ENCODE measurements at regions of chr19 and their contacts with region 1.

Region 1: DNA sequence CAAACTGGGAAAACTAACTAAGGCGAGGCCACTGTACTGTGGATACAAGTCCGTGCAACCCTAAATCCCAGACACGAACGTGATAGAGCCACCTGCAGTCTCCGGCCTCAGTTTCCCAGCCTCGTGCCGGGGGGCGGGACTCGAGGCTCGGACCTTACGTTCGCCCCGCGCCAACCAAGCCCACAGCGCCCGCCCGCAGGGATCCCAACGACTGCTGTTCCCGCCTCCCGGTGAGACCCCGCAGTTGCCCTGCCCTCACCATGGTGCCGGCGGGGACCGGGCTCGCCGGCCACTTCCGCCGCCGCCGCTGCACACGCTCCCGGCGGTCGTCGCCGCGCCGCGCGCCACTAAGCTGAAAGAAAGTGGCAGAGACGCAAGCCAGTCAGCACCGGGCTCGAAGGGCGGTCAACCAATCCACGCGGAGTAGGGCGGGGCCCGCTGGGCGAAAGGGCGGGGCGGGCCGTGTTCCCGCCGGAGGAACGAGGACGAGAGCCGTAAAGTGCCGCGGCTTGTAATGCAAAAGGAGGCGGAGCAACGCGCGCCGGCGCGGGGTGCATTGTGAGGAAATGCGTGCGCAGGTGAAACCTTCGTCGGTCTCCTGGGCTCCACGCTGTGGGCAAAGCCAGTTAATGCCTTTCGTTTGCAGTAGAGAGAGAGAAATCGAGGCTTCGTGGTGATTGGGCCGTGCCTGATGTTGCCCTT is at the start of gene LSM4:
- DNase-seq: peak; percentile 99
- total RNA-seq, gene LSM4: 83.8 TPM

Region 2: GRCh38 chr19:18304458-18305310 is 18.2 kb before region 1 on chr19:
- intact Hi-C with region 1: loop called (anchors 2 kb)
- DNase-seq: peak; percentile 93

Measured in cardiac septum (tissue), 1 donor.